ENCODE measurements at regions of chr14 and their contacts with region 1.

Region 1: DNA sequence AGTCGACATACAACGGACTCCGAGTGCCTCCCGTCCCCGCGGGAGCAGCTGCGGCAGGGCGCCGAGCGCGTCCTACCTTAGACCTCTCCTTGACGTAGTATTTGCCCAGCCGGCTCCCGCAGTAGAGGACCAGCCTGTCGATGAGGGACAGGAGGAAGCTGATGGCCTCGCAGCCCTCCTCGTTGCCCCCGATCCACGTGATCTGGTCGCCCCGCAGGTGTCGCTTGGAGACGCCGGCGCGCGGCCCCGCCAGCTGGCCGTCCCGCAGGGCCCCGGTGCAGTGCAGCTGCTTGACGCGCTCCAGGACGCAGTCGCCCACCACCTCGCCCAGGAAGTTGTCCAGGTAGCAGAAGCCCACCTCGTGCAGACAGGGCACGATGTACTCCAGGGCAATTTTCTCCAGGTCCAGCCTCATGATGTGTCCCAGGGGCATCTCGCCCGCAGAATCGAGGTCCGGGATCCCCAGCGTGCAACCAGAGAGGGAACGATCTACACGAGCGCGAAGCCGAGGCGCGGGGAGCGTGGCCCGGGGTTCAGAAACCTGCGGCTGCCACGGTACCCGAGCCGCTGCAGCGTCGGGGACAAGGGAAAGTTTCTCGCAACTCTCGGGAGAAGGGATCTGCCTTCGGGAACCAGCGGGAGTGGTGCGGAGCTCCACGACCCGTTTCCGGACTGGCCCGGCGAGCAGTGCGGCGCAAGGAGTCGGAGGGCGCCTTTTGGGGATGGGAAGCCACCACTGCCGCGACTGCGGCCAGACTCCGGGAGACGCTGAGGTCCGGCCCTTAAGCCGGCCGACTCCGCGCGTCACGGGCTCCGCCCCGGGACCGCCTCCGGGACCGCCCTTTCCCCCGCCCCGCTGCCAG is at the start of gene EGLN3:
- DNase-seq: no peak
- ATAC-seq: peak; percentile 76
- H3K4me3 ChIP-seq: peak within 1 kb of the TSS; percentile 69
- H3K27ac ChIP-seq: no peak within 1 kb of the TSS
- H3K4me1 ChIP-seq: peaks cover 5% of the 10 kb centered on the region; the same call in 1 of the 2 replicates
- H3K27me3 ChIP-seq: peaks cover 0 to 8% of the 10 kb centered on the region in 2 experiments; a peak in 2 of 4 replicates
- CTCF ChIP-seq: no peak
- EP300 ChIP-seq: 0 out of 4 replicates have a peak, but pooled peaks of 1 of the 2 experiments have one; percentile 10
- POLR2A ChIP-seq: peak; percentile 84
- RAD21 ChIP-seq: no peak
- polyA plus RNA-seq, gene EGLN3: 1.4 to 2.1 TPM

Region 2: DNA sequence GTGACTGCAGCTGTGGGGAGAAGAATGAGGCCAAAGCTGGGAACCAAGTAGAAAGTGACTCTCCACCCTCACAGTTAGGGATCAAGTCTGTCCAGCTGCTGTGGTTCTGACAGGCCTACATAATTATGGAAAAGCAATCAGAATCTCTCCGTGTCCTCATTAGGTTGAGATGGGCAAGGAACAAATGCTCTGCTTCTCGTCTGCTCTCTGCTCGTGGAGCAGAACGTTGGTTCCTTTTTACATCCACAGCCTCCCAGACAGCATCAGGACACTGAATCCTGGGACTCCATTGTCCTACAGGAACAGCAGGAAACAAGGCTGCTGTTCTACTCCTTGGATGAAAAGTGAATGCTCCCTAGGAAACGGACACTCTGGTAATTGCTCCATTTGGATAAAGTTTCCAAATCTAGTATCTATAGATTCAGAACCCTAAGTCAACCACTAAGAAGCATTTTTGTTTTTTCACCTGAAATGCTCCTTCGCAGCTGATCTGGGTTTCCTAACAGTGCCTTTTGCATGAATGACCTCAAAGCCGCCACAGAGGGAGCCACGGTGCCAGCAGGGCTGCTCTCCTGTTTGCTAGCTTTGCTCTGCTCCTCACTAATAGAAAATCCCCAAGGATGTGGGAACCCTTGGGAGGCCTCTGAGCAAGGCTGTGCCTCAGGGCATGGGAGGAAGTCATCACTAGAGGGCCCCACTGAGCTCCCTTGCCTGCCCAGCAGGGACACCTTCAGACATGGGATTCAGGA is 101.7 kb before region 1 on chr14:
- CTCF ChIA-PET with region 1: interaction called, 38 read pairs
- POLR2A ChIA-PET with region 1: interaction called, 4 read pairs
- RAD21 ChIA-PET with region 1: interaction called, 5 read pairs
- SMC1A ChIA-PET with region 1: interaction called, 35 read pairs
- in situ Hi-C with region 1: no loop called
- intact Hi-C with region 1: loop called (anchors 10 kb)
- DNase-seq: no peak
- ATAC-seq: peak; percentile 86
- H3K4me3 ChIP-seq: no peak overlapping the region
- H3K27ac ChIP-seq: no peak overlapping the region
- H3K4me1 ChIP-seq: no peaks in the 10 kb centered on the region
- H3K27me3 ChIP-seq: no peaks in the 10 kb centered on the region; a peak in 1 of 4 replicates
- CTCF ChIP-seq: peak; percentile 57 to 74 (median 68)
- EP300 ChIP-seq: no peak
- POLR2A ChIP-seq: no peak
- RAD21 ChIP-seq: peak; percentile 71

Region 3: GRCh38 chr14:33938131-33938949 is 12.2 kb before region 1 on chr14:
- CTCF ChIA-PET with region 1: interaction called, 45 read pairs
- POLR2A ChIA-PET with region 1: interaction called, 13 read pairs
- RAD21 ChIA-PET with region 1: interaction called, 13 read pairs
- SMC1A ChIA-PET with region 1: interaction called, 47 read pairs
- in situ Hi-C with region 1: no loop called
- intact Hi-C with region 1: no loop called
- DNase-seq: peak; percentile 36
- ATAC-seq: no peak
- H3K4me3 ChIP-seq: no peak overlapping the region; the same call in 1 of the 2 replicates
- H3K27ac ChIP-seq: no peak overlapping the region
- H3K4me1 ChIP-seq: no peaks in the 10 kb centered on the region
- H3K27me3 ChIP-seq: no peaks in the 10 kb centered on the region
- CTCF ChIP-seq: no peak
- EP300 ChIP-seq: no peak
- POLR2A ChIP-seq: no peak
- RAD21 ChIP-seq: no peak

Region 4: GRCh38 chr14:33979613-33980276 is 29.2 kb after region 1 on chr14:
- CTCF ChIA-PET with region 1: interaction called, 3 read pairs
- POLR2A ChIA-PET with region 1: interaction called, 3 read pairs
- RAD21 ChIA-PET with region 1: interaction called, 6 read pairs
- SMC1A ChIA-PET with region 1: interaction called, 10 read pairs
- in situ Hi-C with region 1: no loop called
- intact Hi-C with region 1: no loop called
- DNase-seq: peak; percentile 43
- ATAC-seq: peak; percentile 78
- H3K4me3 ChIP-seq: no peak overlapping the region
- H3K27ac ChIP-seq: no peak overlapping the region
- H3K4me1 ChIP-seq: no peaks in the 10 kb centered on the region
- H3K27me3 ChIP-seq: no peaks in the 10 kb centered on the region
- CTCF ChIP-seq: no peak
- EP300 ChIP-seq: peak; percentile 39 to 68; a peak in 2 of 4 replicates
- POLR2A ChIP-seq: no peak
- RAD21 ChIP-seq: no peak

Region 5: GRCh38 chr14:34018564-34019244 is 68.2 kb after region 1 on chr14:
- CTCF ChIA-PET with region 1: interaction called, 9 read pairs
- POLR2A ChIA-PET with region 1: interaction called, 8 read pairs
- RAD21 ChIA-PET with region 1: interaction called, 29 read pairs
- SMC1A ChIA-PET with region 1: interaction called, 57 read pairs
- in situ Hi-C with region 1: no loop called
- intact Hi-C with region 1: no loop called
- DNase-seq: peak; percentile 45
- ATAC-seq: peak; percentile 83
- H3K4me3 ChIP-seq: peak overlapping the region; percentile 72
- H3K27ac ChIP-seq: peak overlapping the region; percentile 14
- H3K4me1 ChIP-seq: peaks cover 5% of the 10 kb centered on the region
- H3K27me3 ChIP-seq: no peaks in the 10 kb centered on the region
- CTCF ChIP-seq: no peak
- EP300 ChIP-seq: peak in 1 of 2 experiments; percentile 14; a peak in 1 of 4 replicates
- POLR2A ChIP-seq: 0 out of 2 replicates have a peak, but pooled peaks have one; percentile 39
- RAD21 ChIP-seq: no peak

Region 6: DNA sequence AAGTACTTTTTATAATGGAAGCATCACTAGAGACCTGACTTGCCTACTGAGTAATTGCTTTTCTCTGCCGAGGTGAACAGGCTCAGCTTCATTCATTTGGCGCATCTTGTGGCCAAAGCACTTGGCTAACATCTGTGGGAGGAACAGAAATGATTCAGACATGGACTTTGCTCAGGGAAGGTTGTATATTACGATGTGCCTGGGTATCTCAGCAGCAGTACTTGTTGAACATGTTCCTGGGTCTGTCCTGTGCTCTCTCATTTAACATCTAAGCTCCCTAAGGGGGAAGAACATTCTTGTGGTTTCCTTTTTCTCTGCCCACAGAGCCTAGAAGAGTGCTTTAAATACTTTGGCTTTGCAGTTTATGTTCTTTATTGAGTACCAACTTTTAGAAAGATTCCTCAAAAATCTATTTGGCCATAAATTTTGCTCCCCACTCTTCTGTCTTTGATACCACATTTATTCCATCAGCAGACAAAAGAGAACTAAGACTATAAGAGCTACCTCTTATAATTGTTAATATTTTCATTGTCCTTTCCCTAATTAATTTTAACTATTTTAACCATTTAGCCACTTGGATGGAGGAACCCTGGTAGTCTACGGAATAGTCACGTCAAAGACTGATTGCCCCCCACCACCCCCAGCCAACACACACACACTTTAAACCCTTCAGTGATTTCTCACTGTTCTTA is 101.6 kb after region 1 on chr14:
- CTCF ChIA-PET with region 1: interaction called, 10 read pairs
- POLR2A ChIA-PET with region 1: no interaction called
- RAD21 ChIA-PET with region 1: interaction called, 9 read pairs
- SMC1A ChIA-PET with region 1: interaction called, 13 read pairs
- in situ Hi-C with region 1: no loop called
- intact Hi-C with region 1: no loop called
- DNase-seq: peak; percentile 76
- ATAC-seq: peak; percentile 78
- H3K4me3 ChIP-seq: no peak overlapping the region
- H3K27ac ChIP-seq: no peak overlapping the region
- H3K4me1 ChIP-seq: peaks cover 28% of the 10 kb centered on the region
- H3K27me3 ChIP-seq: no peaks in the 10 kb centered on the region
- CTCF ChIP-seq: no peak
- EP300 ChIP-seq: peak in 1 of 2 experiments; percentile 49; a peak in 1 of 4 replicates
- POLR2A ChIP-seq: no peak
- RAD21 ChIP-seq: no peak

Region 7: DNA sequence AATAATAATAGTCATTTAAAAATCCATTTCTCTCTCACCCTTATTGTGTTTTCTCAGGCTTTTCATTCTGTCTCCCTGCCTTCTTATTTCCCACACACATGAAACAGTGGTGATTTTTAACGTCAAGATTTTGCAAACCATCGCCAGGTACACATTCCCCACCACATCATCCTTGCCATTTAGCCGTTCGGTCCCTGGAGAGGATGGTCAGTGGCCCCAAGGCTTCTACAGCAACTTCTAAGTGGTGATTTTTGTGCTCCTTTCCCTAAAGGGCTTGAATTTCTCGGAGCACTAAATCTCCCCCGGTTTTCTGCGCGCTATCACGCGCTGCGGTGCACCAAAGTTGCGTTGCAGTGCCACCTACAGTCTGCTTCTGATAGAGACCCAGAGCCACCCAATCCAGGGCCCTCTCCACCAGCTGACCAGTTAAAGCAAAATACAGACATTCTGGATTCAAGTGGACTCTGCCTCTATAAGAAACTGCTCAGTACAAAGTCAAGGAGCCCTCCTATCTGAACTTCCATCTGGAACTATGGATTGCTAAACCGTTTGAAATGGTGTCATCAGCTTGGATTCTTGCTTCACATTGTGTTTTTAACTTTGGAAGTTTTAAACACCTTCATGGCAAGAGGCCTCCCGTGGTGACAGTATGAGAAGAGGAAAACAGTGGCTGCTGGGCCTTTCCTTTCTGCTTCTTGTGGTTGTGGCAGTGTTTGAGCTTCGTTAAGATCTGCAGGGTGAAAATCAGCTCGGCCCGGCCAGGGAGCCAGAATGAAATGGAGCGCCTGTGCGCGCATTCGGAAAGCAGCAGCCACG is 277.5 kb after region 1 on chr14:
- CTCF ChIA-PET with region 1: interaction called, 10 read pairs
- POLR2A ChIA-PET with region 1: no interaction called
- RAD21 ChIA-PET with region 1: interaction called, 5 read pairs
- SMC1A ChIA-PET with region 1: interaction called, 7 read pairs
- in situ Hi-C with region 1: no loop called
- intact Hi-C with region 1: no loop called
- DNase-seq: no peak
- ATAC-seq: peak; percentile 96
- H3K4me3 ChIP-seq: no peak overlapping the region
- H3K27ac ChIP-seq: no peak overlapping the region
- H3K4me1 ChIP-seq: no peaks in the 10 kb centered on the region
- H3K27me3 ChIP-seq: peaks cover 0 to 2% of the 10 kb centered on the region in 2 experiments; a peak in 1 of 4 replicates
- CTCF ChIP-seq: peak; percentile 71 to 78 (median 72); a peak in 5 of 6 replicates
- EP300 ChIP-seq: no peak
- POLR2A ChIP-seq: no peak
- RAD21 ChIP-seq: peak; percentile 81

Measured in GM12878 (cell line).